HCT116 (cell line): ENCODE measurements at regions of chr1 and their contacts with region 1.

Region 1: DNA sequence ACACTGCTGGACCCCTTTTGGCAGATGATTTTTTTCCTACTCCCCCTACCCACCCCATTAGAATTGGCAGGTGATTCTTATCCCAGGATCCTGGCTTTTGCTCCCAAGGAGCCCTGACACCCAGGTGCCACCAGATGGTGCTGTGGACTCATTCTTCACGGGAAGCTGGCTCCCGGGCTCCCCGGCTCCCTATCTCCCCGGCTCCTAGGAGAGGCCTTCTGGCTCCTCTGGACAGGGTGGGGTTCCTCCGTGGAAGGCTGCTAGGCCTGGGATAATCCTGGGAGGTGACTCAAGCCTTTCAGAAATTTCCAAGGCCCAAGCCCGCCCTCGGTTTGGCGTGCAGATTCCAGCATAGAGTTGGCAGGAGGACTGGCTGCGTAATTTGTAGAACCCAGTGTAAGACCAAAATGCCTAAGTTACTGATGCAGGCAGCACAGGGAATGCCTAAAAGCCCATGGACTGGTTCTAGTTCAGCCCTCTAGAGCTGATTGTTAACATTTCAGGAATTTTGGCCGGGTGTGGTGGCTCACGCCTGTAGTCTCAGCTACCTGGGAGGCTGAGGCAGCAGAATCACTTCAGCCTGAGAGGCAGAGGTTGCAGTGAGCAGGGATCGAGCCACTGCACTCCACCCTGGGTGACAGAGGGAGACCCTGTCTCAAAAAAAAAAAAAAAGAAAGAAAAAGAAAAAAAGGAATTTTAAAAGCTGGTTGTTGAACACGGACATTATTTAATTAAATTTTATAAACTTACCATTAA is 6.8 kb upstream of the BSDC1 start:
- DNase-seq: peak; percentile 66
- ATAC-seq: peak; percentile 98
- H3K4me3 ChIP-seq: no peak overlapping the region
- H3K27ac ChIP-seq: peak overlapping the region; percentile 37; the same call in 1 of the 2 replicates
- H3K4me1 ChIP-seq: peaks cover 3 to 7% of the 10 kb centered on the region in 2 experiments; a peak in 2 of 4 replicates
- H3K27me3 ChIP-seq: no peaks in the 10 kb centered on the region
- CTCF ChIP-seq: peak; percentile 88 to 97 (median 93)
- POLR2A ChIP-seq: no peak
- RAD21 ChIP-seq: peak; percentile 94

Region 2: GRCh38 chr1:32876341-32877210 is 475.5 kb after region 1 on chr1:
- CTCF ChIA-PET with region 1: interaction called, 5 read pairs
- POLR2A ChIA-PET with region 1: no interaction called
- RAD21 ChIA-PET with region 1: no interaction called
- intact Hi-C with region 1: loop called (anchors 2 kb)
- DNase-seq: peak; percentile 28
- ATAC-seq: peak; percentile 90
- H3K4me3 ChIP-seq: no peak overlapping the region
- H3K27ac ChIP-seq: no peak overlapping the region
- H3K4me1 ChIP-seq: peaks cover 2 to 16% of the 10 kb centered on the region in 2 experiments; a peak in 3 of 4 replicates
- H3K27me3 ChIP-seq: no peaks in the 10 kb centered on the region
- CTCF ChIP-seq: peak; percentile 86 to 98 (median 97)
- POLR2A ChIP-seq: no peak
- RAD21 ChIP-seq: peak; percentile 82